Astrocyte of the cerebellum (primary cell): ENCODE measurements at regions of chr6 and their contacts with region 1.

Region 1: DNA sequence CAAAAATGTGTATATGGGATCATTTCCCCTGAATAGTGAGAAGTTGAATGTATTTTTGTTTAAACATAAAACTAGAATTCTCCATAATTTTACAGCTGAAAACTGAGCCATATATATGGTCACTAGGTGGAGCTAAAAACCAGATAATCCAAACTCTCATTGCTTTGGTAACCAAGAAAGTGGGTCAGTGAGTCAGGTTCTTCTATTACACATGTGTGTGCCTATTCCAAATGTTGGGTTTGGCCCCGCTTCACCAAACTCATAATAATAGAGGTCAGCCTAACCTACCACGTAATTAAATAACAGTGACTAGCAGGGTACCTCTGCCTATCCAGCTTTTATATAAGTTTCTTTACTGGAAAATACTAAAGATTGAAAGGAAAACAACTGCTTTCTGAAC is 19.3 kb upstream of the RNGTT start:
- DNase-seq: peak; percentile 90
- H3K4me3 ChIP-seq: no peak overlapping the region
- CTCF ChIP-seq: peak; percentile 47

Region 2: DNA sequence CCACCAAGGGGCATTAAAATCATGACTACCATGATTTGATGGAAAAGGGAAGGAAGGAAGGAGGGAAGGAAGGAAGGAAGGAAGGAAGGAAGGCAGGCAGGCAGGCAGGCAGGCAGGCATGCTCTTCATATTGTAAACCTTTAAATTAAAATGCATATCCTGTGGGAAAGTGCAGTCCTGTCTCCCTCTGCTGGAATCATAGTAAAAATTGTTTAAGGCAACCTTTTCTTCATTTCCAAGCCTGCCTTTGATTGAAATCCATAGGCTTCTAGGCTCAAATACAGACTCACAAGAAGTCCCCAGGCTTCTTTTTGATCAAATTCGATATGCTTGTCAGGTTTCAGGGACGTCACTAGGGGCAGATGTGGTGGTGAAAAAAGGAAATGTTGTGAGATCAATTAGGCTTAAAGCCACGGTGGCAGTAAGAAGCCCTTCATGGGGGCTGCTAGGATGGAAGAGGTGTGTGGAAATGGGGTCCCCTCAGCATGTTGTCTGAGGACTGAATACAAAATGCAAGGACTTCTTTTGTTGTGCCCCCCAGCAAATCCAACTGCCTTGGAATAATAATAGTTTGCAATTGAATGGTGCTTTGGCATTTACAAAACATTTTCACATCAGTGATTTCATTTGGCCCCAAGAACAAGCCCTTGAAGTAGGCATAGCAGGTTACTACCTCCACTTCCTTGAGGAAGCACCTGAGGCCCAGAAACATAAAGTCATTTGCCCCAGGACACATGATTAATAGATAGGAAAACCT is 260.0 kb after region 1 on chr6:
- in situ Hi-C with region 1: loop called (anchors 25 kb)
- DNase-seq: peak; percentile 46
- H3K4me3 ChIP-seq: no peak overlapping the region
- CTCF ChIP-seq: peak; percentile 52